Common myeloid progenitor, CD34-positive (primary cell): ENCODE measurements at regions of chr1 and their contacts with region 1.

Region 1: GRCh38 chr1:205396967-205397616 is 24.8 kb downstream of the LEMD1 start:
- DNase-seq: peak; percentile 52 to 69 (median 69)
- H3K4me3 ChIP-seq: no peak overlapping the region
- H3K27ac ChIP-seq: no peak overlapping the region
- H3K4me1 ChIP-seq: no peaks in the 10 kb centered on the region
- H3K27me3 ChIP-seq: peaks cover 1 to 10% (median 4%) of the 10 kb centered on the region in 5 experiments

Region 2: GRCh38 chr1:205287767-205288559 is 109.1 kb before region 1 on chr1:
- CTCF ChIA-PET with region 1: no interaction called
- POLR2A ChIA-PET with region 1: no interaction called
- DNase-seq: peak; percentile 93 to 99 (median 98)
- H3K4me3 ChIP-seq: peak overlapping the region in 4 of 7 experiments; percentile 0 to 31 (median 26)
- H3K27ac ChIP-seq: peak overlapping the region in 1 of 2 experiments; percentile 20
- H3K4me1 ChIP-seq: peaks cover 25 to 54% (median 52%) of the 10 kb centered on the region in 4 experiments
- H3K27me3 ChIP-seq: peaks cover 0 to 12% (median 0%) of the 10 kb centered on the region in 5 experiments

Region 3: DNA sequence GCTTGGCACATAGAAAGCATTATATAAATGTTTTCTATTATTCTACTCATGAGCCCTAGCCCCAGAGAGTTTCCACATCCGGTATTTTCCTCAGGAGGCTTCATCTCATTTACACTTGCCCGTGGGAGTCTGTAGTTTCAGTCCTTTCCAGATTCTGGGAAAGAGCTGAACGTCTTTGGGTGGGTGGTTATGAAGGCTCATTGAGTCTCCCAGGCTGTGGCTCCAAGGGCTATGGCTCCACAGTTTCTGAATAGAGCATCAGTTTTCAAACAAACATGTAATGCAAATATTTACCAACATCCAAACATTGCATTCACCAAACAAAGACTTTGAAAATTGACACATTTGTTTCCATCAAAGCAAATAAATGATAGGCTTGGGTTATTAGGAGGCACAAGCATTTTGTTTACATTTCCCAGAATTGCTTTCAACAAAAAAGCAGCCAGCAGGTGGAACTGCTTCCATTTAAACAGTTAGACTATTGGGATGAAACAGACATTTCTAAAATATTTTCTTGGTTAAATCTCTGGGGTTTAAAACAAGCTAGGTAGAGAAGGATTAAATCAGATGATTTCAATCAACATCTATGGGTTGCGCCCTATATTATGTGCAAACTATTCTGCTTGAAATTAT is 26.0 kb after region 1 on chr1:
- CTCF ChIA-PET with region 1: interaction called, 20 read pairs
- POLR2A ChIA-PET with region 1: no interaction called
- DNase-seq: no peak
- H3K4me3 ChIP-seq: no peak overlapping the region
- H3K27ac ChIP-seq: no peak overlapping the region
- H3K4me1 ChIP-seq: peaks cover 0 to 1% (median 0%) of the 10 kb centered on the region in 4 experiments
- H3K27me3 ChIP-seq: peaks cover 2 to 24% (median 8%) of the 10 kb centered on the region in 5 experiments